ENCODE measurements at regions of chr10 and their contacts with region 1.

Region 1: GRCh38 chr10:21039721-21040120 is 142.6 kb upstream of the NEBL start:
- DNase-seq: no peak
- H3K4me3 ChIP-seq: no peak overlapping the region
- H3K4me3 Mint-ChIP-seq: no peak overlapping the region
- H3K27ac Mint-ChIP-seq: no peak overlapping the region
- H3K4me1 ChIP-seq: no peaks in the 10 kb centered on the region; the same call in 1 of the 2 replicates
- H3K4me1 Mint-ChIP-seq: no peaks in the 10 kb centered on the region
- H3K27me3 ChIP-seq: no peaks in the 10 kb centered on the region
- H3K27me3 Mint-ChIP-seq: no peaks in the 10 kb centered on the region
- CTCF ChIP-seq: no peak

Region 2: GRCh38 chr10:21069929-21070700 is 30.4 kb after region 1 on chr10:
- CTCF ChIA-PET with region 1: no interaction called
- POLR2A ChIA-PET with region 1: no interaction called
- intact Hi-C with region 1: no loop called
- DNase-seq: no peak
- H3K4me3 ChIP-seq: no peak overlapping the region
- H3K4me3 Mint-ChIP-seq: no peak overlapping the region
- H3K27ac Mint-ChIP-seq: no peak overlapping the region
- H3K4me1 ChIP-seq: no peaks in the 10 kb centered on the region
- H3K4me1 Mint-ChIP-seq: no peaks in the 10 kb centered on the region
- H3K27me3 ChIP-seq: no peaks in the 10 kb centered on the region
- H3K27me3 Mint-ChIP-seq: peaks cover 3% of the 10 kb centered on the region
- CTCF ChIP-seq: no peak

Region 3: DNA sequence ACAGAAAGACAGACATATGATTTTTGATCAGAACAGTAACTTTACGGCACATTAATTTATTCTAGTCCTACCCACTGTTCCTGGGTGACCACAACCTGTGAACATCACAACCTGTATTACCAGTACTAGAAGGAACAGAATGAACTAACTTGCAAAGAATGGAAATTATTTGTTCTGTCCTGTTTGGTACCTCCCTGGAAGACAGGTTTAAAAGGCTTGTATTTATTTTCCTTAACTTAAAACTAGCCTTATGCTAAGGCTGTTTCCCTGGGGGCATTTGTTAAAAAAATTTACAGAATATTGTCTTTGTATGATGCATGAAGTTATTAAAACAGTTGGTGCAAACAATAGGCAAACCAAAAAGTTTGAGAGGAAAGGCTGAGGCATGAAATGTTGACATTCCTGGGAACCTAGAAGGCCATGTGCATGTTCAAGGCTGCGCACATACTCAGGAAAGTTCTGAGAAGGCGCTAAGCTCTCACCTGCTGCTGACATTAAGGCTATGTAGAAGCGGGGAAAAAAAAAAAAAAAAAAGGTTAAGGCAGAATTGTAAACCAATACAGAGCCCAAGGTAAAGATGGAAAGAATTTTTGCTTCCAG is 831.2 kb after region 1 on chr10:
- CTCF ChIA-PET with region 1: no interaction called
- POLR2A ChIA-PET with region 1: no interaction called
- intact Hi-C with region 1: loop called (anchors 5 kb)
- DNase-seq: no peak
- H3K4me3 ChIP-seq: no peak overlapping the region
- H3K4me3 Mint-ChIP-seq: no peak overlapping the region
- H3K27ac Mint-ChIP-seq: no peak overlapping the region
- H3K4me1 ChIP-seq: no peaks in the 10 kb centered on the region
- H3K4me1 Mint-ChIP-seq: no peaks in the 10 kb centered on the region
- H3K27me3 ChIP-seq: no peaks in the 10 kb centered on the region
- H3K27me3 Mint-ChIP-seq: no peaks in the 10 kb centered on the region
- CTCF ChIP-seq: no peak

Measured in Caco-2 (cell line).